SK-N-SH (cell line): ENCODE measurements at regions of chr19 and their contacts with region 1.

Region 1: GRCh38 chr19:9627856-9628255 is 6.8 kb upstream of the ZNF561 start:
- DNase-seq: no peak
- H3K4me3 ChIP-seq: no peak overlapping the region
- H3K27ac ChIP-seq: no peak overlapping the region
- H3K4me1 ChIP-seq: no peaks in the 10 kb centered on the region
- H3K27me3 ChIP-seq: no peaks in the 10 kb centered on the region
- CTCF ChIP-seq: no peak
- EP300 ChIP-seq: no peak
- RAD21 ChIP-seq: no peak

Region 2: GRCh38 chr19:9796113-9796773 is 168.4 kb after region 1 on chr19:
- CTCF ChIA-PET with region 1: interaction called, 30 read pairs
- POLR2A ChIA-PET with region 1: interaction called, 5 read pairs
- DNase-seq: peak; percentile 76
- H3K4me3 ChIP-seq: peak overlapping the region in 1 of 2 experiments; percentile 2; a peak in 1 of 4 replicates
- H3K27ac ChIP-seq: no peak overlapping the region; a peak in 2 of 4 replicates
- H3K4me1 ChIP-seq: peaks cover under 1% of the 10 kb centered on the region in 2 experiments; a peak in 1 of 4 replicates
- H3K27me3 ChIP-seq: no peaks in the 10 kb centered on the region
- CTCF ChIP-seq: peak; percentile 88
- EP300 ChIP-seq: peak in 1 of 2 experiments; percentile 37; a peak in 1 of 4 replicates
- RAD21 ChIP-seq: peak; percentile 97